HepG2 (cell line): ENCODE measurements at regions of chr14 and their contacts with region 1.

Region 1: DNA sequence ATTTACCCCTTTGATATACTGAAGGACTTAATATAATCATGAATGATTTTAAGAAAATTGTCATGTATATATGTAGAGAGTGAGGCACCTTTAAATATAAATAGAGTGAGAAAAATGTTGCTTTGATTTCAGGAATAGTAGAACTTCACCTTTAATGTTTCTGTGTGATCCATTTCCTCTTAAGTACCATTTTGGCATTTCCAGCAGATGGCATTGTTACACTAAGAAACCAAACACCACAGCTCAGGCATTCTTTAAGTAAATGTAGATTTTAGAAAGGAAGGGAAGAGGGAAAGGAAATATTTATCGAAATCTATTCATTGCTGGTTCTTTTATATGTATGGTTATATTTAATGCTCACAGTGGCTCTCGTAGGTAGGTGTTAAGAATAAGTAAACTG is 556.7 kb upstream of the FBXO33 start:
- DNase-seq: peak; percentile 64
- ATAC-seq: peak; percentile 82
- H3K4me3 ChIP-seq: no peak overlapping the region
- H3K27ac ChIP-seq: no peak overlapping the region
- H3K4me1 ChIP-seq: no peaks in the 10 kb centered on the region
- H3K27me3 ChIP-seq: no peaks in the 10 kb centered on the region
- CTCF ChIP-seq: peak; percentile 76
- EP300 ChIP-seq: no peak
- POLR2A ChIP-seq: no peak
- RAD21 ChIP-seq: no peak

Region 2: GRCh38 chr14:39491134-39491571 is 497.8 kb before region 1 on chr14:
- CTCF ChIA-PET with region 1: no interaction called
- POLR2A ChIA-PET with region 1: no interaction called
- in situ Hi-C with region 1: no loop called
- intact Hi-C with region 1: loop called (anchors 1 kb)
- DNase-seq: peak; percentile 59
- ATAC-seq: peak; percentile 51
- H3K4me3 ChIP-seq: no peak overlapping the region
- H3K27ac ChIP-seq: no peak overlapping the region
- H3K4me1 ChIP-seq: no peaks in the 10 kb centered on the region
- H3K27me3 ChIP-seq: 0 out of 5 replicates have a peak, but pooled peaks cover 0 to 2% of the 10 kb centered on the region in 2 experiments
- CTCF ChIP-seq: peak; percentile 62
- EP300 ChIP-seq: no peak
- POLR2A ChIP-seq: no peak
- RAD21 ChIP-seq: no peak; the same call in 1 of the 2 replicates

Region 3: GRCh38 chr14:40010961-40011360 is 22.0 kb after region 1 on chr14:
- CTCF ChIA-PET with region 1: no interaction called
- POLR2A ChIA-PET with region 1: no interaction called
- in situ Hi-C with region 1: no loop called
- intact Hi-C with region 1: loop called (anchors 1 kb)
- DNase-seq: no peak
- ATAC-seq: no peak
- H3K4me3 ChIP-seq: no peak overlapping the region
- H3K27ac ChIP-seq: no peak overlapping the region
- H3K4me1 ChIP-seq: no peaks in the 10 kb centered on the region
- H3K27me3 ChIP-seq: no peaks in the 10 kb centered on the region
- CTCF ChIP-seq: no peak
- EP300 ChIP-seq: no peak
- POLR2A ChIP-seq: no peak
- RAD21 ChIP-seq: no peak

Region 4: GRCh38 chr14:40280652-40281051 is 291.7 kb after region 1 on chr14:
- CTCF ChIA-PET with region 1: no interaction called
- POLR2A ChIA-PET with region 1: no interaction called
- in situ Hi-C with region 1: no loop called
- intact Hi-C with region 1: loop called (anchors 1 kb)
- DNase-seq: no peak
- ATAC-seq: no peak
- H3K4me3 ChIP-seq: no peak overlapping the region
- H3K27ac ChIP-seq: no peak overlapping the region
- H3K4me1 ChIP-seq: no peaks in the 10 kb centered on the region
- H3K27me3 ChIP-seq: no peaks in the 10 kb centered on the region
- CTCF ChIP-seq: peak; percentile 23; the same call in 1 of the 2 replicates
- EP300 ChIP-seq: no peak
- POLR2A ChIP-seq: no peak
- RAD21 ChIP-seq: no peak

Region 5: GRCh38 chr14:40859065-40859464 is 870.1 kb after region 1 on chr14:
- CTCF ChIA-PET with region 1: no interaction called
- POLR2A ChIA-PET with region 1: no interaction called
- in situ Hi-C with region 1: no loop called
- intact Hi-C with region 1: no loop called
- DNase-seq: no peak
- ATAC-seq: no peak
- H3K4me3 ChIP-seq: no peak overlapping the region
- H3K27ac ChIP-seq: no peak overlapping the region
- H3K4me1 ChIP-seq: no peaks in the 10 kb centered on the region
- H3K27me3 ChIP-seq: no peaks in the 10 kb centered on the region
- CTCF ChIP-seq: no peak
- EP300 ChIP-seq: no peak
- POLR2A ChIP-seq: no peak
- RAD21 ChIP-seq: no peak

Region 6: DNA sequence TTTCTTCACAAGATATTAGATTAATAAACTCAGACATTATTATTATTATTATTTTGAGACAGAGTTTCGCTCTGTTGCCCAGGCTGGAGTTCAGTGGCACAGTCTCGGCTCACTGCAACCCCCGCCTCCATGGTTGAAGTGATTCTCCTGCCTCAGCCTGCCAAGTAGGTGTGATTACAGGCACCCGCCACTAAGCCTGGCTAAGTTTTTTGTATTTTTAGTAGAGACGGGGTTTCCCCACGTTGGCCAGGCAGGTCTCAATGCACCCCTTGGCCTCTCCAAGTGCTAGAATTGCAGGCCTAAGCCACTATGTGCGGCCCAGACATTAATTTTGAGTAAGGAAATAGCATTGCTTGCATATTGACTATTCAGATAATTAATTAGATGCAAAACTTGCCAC is 1062.9 kb after region 1 on chr14:
- CTCF ChIA-PET with region 1: no interaction called
- POLR2A ChIA-PET with region 1: no interaction called
- in situ Hi-C with region 1: no loop called
- intact Hi-C with region 1: loop called (anchors 10 kb)
- DNase-seq: no peak
- ATAC-seq: no peak
- H3K4me3 ChIP-seq: no peak overlapping the region
- H3K27ac ChIP-seq: no peak overlapping the region
- H3K4me1 ChIP-seq: no peaks in the 10 kb centered on the region
- H3K27me3 ChIP-seq: no peaks in the 10 kb centered on the region
- CTCF ChIP-seq: no peak
- EP300 ChIP-seq: no peak
- POLR2A ChIP-seq: no peak
- RAD21 ChIP-seq: no peak